ENCODE measurements at regions of chr18 and their contacts with region 1.

Region 1: GRCh38 chr18:52391810-52392559 is 52.0 kb downstream of the DCC start:
- DNase-seq: no peak
- H3K4me3 ChIP-seq: no peak overlapping the region
- H3K27ac ChIP-seq: no peak overlapping the region
- H3K4me1 ChIP-seq: no peaks in the 10 kb centered on the region
- H3K27me3 ChIP-seq: no peaks in the 10 kb centered on the region
- CTCF ChIP-seq: no peak
- POLR2A ChIP-seq: no peak

Region 2: DNA sequence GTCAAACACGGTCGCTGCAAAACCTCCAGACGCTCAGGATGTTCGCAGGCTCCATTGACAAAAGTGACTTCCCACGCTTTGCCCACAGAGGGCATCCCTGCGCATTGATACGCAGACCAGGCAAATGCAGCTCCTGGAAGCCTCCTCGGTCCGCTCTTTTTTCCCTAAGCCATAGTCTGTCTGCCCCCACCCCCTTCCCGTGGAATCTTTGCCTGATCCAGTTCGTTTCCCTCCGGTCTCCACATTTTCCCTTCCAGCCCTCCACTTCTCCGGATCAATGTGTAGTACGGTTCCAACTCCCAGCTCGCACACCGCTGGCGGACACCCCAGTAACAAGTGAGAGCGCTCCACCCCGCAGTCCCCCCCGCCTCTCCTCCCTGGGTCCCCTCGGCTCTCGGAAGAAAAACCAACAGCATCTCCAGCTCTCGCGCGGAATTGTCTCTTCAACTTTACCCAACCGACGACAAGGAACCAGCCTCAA is 52.1 kb before region 1 on chr18 and contains the start of gene DCC:
- intact Hi-C with region 1: no loop called
- DNase-seq: peak; percentile 19
- H3K4me3 ChIP-seq: no peak within 1 kb of the TSS
- H3K27ac ChIP-seq: no peak within 1 kb of the TSS
- H3K4me1 ChIP-seq: no peaks in the 10 kb centered on the region
- H3K27me3 ChIP-seq: peaks cover 11% of the 10 kb centered on the region
- CTCF ChIP-seq: no peak
- POLR2A ChIP-seq: no peak
- total RNA-seq, gene DCC: 0.55 to 3.7 TPM

Region 3: GRCh38 chr18:52442686-52443085 is 50.7 kb after region 1 on chr18:
- intact Hi-C with region 1: loop called (anchors 10 kb)
- DNase-seq: no peak
- H3K4me3 ChIP-seq: no peak overlapping the region
- H3K27ac ChIP-seq: no peak overlapping the region
- H3K4me1 ChIP-seq: no peaks in the 10 kb centered on the region
- H3K27me3 ChIP-seq: no peaks in the 10 kb centered on the region
- CTCF ChIP-seq: no peak
- POLR2A ChIP-seq: no peak

Measured in prostate gland (tissue), 2 donors.